Vagina (tissue), 2 donors: ENCODE measurements at regions of chr11 and their contacts with region 1.

Region 1: DNA sequence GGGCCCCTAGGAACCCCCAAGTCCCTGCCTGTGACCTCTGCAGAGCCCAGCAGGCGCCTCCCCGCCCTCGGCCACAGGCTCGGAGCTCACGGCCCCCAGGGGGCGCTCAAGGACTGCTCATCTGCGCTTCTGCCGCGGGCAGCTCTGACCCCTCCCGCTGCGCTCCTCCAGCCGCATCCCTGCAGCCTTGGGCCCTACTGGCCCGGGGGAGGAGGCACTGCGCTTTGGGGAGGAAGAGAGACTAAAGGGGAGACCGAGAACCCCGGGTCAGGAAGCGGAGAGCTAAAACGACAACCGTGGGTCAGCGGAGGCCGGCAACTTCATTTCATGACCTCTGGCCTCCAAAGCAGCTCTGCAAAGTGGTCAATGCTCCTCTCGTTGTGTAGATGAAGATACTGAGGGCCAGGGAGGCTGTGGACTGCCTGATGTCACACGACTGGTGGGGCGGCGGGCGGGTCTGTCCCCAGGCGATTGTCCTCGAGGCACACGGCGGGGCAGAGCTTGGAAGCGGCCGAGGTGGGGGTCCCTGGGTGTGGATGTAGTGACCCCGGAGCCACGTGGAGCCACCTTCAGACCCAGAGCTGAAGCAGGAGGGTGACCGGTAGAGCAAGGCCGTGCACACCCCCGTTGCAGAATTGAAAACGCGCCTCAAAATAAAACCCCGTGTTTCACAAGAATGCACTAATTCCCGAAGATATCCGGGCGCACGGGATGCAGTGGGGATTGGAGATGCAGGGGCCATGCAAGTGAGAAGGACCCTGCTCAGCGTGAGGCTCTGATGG is 2.7 kb upstream of the KRTAP5-6 start:
- DNase-seq: no peak
- H3K4me3 ChIP-seq: peak overlapping the region; percentile 35 to 48
- H3K27ac ChIP-seq: peak overlapping the region; percentile 42
- H3K4me1 ChIP-seq: peaks cover 16% of the 10 kb centered on the region
- H3K27me3 ChIP-seq: no peaks in the 10 kb centered on the region
- CTCF ChIP-seq: peak; percentile 94 to 98 (median 96)
- POLR2A ChIP-seq: no peak

Region 2: GRCh38 chr11:1830322-1831223 is 136.3 kb after region 1 on chr11:
- intact Hi-C with region 1: loop called (anchors 2 kb)
- DNase-seq: no peak
- H3K4me3 ChIP-seq: no peak overlapping the region
- H3K27ac ChIP-seq: no peak overlapping the region
- H3K4me1 ChIP-seq: peaks cover 65% of the 10 kb centered on the region
- H3K27me3 ChIP-seq: no peaks in the 10 kb centered on the region
- CTCF ChIP-seq: no peak
- POLR2A ChIP-seq: no peak